ENCODE measurements at regions of chr14 and their contacts with region 1.

Region 1: GRCh38 chr14:64880221-64881121 is 764 bp upstream of the SPTB start:
- DNase-seq: peak; percentile 29 to 68 (median 54)
- ATAC-seq: peak; percentile 85
- H3K4me3 ChIP-seq: peak overlapping the region; percentile 67
- H3K4me3 Mint-ChIP-seq: peak overlapping the region; percentile 85 to 92 (median 88)
- H3K27ac ChIP-seq: peak overlapping the region; percentile 20
- H3K27ac Mint-ChIP-seq: peak overlapping the region in 4 of 9 donors; percentile 14 to 59 (median 36)
- H3K4me1 ChIP-seq: peaks cover 0 to 4% of the 10 kb centered on the region in 2 donors
- H3K4me1 Mint-ChIP-seq: peaks cover 0 to 11% (median 8%) of the 10 kb centered on the region in 7 donors
- H3K27me3 ChIP-seq: peaks cover 0 to 7% of the 10 kb centered on the region in 2 donors
- H3K27me3 Mint-ChIP-seq: peaks cover 13 to 81% (median 19%) of the 10 kb centered on the region in 5 donors

Region 2: GRCh38 chr14:64272019-64272418 is 608.5 kb before region 1 on chr14:
- CTCF ChIA-PET with region 1: no interaction called
- POLR2A ChIA-PET with region 1: no interaction called
- intact Hi-C with region 1: no loop called
- DNase-seq: no peak
- ATAC-seq: no peak
- H3K4me3 ChIP-seq: no peak overlapping the region
- H3K4me3 Mint-ChIP-seq: no peak overlapping the region
- H3K27ac ChIP-seq: no peak overlapping the region
- H3K27ac Mint-ChIP-seq: no peak overlapping the region
- H3K4me1 ChIP-seq: no peaks in the 10 kb centered on the region
- H3K4me1 Mint-ChIP-seq: peaks cover 0 to 13% (median 7%) of the 10 kb centered on the region in 7 donors
- H3K27me3 ChIP-seq: no peaks in the 10 kb centered on the region
- H3K27me3 Mint-ChIP-seq: peaks cover 0 to 19% (median 4%) of the 10 kb centered on the region in 5 donors

Region 3: DNA sequence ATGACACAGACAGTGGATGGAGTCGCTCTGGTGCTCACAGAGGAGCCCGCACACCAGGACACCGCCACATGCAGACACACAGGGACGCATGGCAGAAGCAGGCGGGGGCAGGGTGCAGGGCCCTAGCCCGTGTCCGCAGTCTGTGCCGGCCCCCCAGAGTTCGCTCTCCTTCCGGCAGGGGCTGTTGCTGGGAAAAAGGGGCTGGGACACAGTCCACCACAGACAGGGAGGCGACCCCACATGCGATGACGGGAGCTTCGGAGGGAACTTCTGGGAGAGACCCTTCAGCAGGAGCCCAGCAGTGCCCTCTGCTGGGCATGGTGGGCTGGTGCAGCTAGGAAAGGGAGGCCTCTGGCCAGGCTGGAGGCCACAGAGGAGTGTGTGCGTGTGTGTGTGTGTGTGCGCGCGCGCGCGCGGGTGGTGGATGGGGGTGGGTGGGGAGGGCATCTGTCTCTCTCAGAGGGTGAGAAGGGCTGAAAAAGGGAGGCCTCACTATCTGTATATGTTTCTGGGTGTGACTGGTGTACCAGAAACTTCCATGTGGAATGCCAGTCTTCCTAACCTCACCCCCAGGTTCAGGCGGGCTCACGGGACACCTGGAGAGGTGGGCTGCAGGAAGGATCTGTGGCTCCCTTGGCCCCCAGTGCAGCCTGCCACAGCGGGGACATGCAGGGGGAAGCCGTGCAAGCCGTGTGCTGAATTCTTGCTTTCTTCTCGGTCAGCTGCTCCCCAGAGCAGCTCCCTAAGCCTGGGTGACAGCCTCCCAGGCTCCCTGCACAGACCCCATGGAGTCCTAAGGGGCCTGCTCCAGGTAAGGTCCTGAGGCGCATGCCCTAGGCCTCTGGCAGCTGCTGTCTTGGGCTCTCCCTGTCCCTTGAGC is 115.6 kb before region 1 on chr14:
- CTCF ChIA-PET with region 1: interaction called, 3 read pairs
- POLR2A ChIA-PET with region 1: no interaction called
- intact Hi-C with region 1: loop called in 1 of 2 experiments (anchors 5 kb)
- DNase-seq: peak; percentile 33 to 71 (median 59)
- ATAC-seq: peak; percentile 86
- H3K4me3 ChIP-seq: peak overlapping the region; percentile 39
- H3K4me3 Mint-ChIP-seq: peak overlapping the region in 9 of 10 donors; percentile 36 to 78 (median 65)
- H3K27ac ChIP-seq: no peak overlapping the region
- H3K27ac Mint-ChIP-seq: peak overlapping the region in 3 of 9 donors; percentile 48 to 62 (median 49)
- H3K4me1 ChIP-seq: peaks cover 0 to 31% of the 10 kb centered on the region in 2 donors
- H3K4me1 Mint-ChIP-seq: peaks cover 2 to 44% (median 23%) of the 10 kb centered on the region in 7 donors
- H3K27me3 ChIP-seq: no peaks in the 10 kb centered on the region
- H3K27me3 Mint-ChIP-seq: peaks cover 0 to 21% (median 0%) of the 10 kb centered on the region in 5 donors

Region 4: GRCh38 chr14:64823305-64823861 is 57.1 kb before region 1 on chr14:
- CTCF ChIA-PET with region 1: interaction called, 18 read pairs
- POLR2A ChIA-PET with region 1: no interaction called
- intact Hi-C with region 1: no loop called
- DNase-seq: peak; percentile 41 to 68 (median 59)
- ATAC-seq: peak; percentile 87
- H3K4me3 ChIP-seq: peak overlapping the region; percentile 19
- H3K4me3 Mint-ChIP-seq: peak overlapping the region in 5 of 10 donors; percentile 16 to 72 (median 60)
- H3K27ac ChIP-seq: no peak overlapping the region
- H3K27ac Mint-ChIP-seq: no peak overlapping the region
- H3K4me1 ChIP-seq: no peaks in the 10 kb centered on the region
- H3K4me1 Mint-ChIP-seq: peaks cover 0 to 9% (median 5%) of the 10 kb centered on the region in 7 donors
- H3K27me3 ChIP-seq: peaks cover 0 to 4% of the 10 kb centered on the region in 2 donors
- H3K27me3 Mint-ChIP-seq: peaks cover 6 to 56% (median 10%) of the 10 kb centered on the region in 5 donors

Measured in naive thymus-derived CD4-positive, alpha-beta T cell (primary cell).